ENCODE measurements at regions of chr5 and their contacts with region 1.

Region 1: GRCh38 chr5:124935065-124935464 is 188.6 kb upstream of the ZNF608 start:
- DNase-seq: no peak
- ATAC-seq: peak; percentile 63
- H3K4me3 Mint-ChIP-seq: peak overlapping the region; percentile 38
- H3K27ac Mint-ChIP-seq: peak overlapping the region; percentile 94
- H3K4me1 Mint-ChIP-seq: peaks cover 24% of the 10 kb centered on the region
- H3K27me3 Mint-ChIP-seq: no peaks in the 10 kb centered on the region
- CTCF ChIP-seq: no peak

Region 2: GRCh38 chr5:123244458-123244857 is 1690.6 kb before region 1 on chr5:
- CTCF ChIA-PET with region 1: no interaction called
- POLR2A ChIA-PET with region 1: no interaction called
- intact Hi-C with region 1: no loop called
- DNase-seq: no peak
- ATAC-seq: no peak
- H3K4me3 Mint-ChIP-seq: no peak overlapping the region
- H3K27ac Mint-ChIP-seq: no peak overlapping the region
- H3K4me1 Mint-ChIP-seq: no peaks in the 10 kb centered on the region
- H3K27me3 Mint-ChIP-seq: no peaks in the 10 kb centered on the region
- CTCF ChIP-seq: no peak

Region 3: DNA sequence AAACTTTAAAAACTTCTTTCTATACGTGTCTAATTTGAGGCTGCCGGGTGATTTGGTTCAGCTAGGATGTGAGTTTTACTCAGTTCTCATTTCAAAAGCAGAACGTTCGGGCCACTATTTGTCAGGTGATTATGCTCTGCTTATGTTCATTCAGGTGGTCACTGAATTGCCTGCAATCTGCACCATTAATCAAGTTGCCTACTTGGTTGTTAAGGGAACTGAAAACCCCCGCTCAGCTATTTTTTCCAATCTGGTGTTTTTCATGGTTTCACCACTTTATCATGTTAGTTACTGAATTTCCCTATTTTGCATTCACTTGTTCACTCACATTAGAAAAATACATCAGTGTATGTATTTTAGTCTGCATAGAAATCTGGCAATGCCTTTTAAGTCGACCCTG is 900.1 kb before region 1 on chr5:
- CTCF ChIA-PET with region 1: no interaction called
- POLR2A ChIA-PET with region 1: interaction called, 4 read pairs
- intact Hi-C with region 1: loop called (anchors 1 kb)
- DNase-seq: no peak
- ATAC-seq: peak; percentile 94
- H3K4me3 Mint-ChIP-seq: peak overlapping the region; percentile 48
- H3K27ac Mint-ChIP-seq: peak overlapping the region; percentile 92
- H3K4me1 Mint-ChIP-seq: peaks cover 52% of the 10 kb centered on the region
- H3K27me3 Mint-ChIP-seq: no peaks in the 10 kb centered on the region
- CTCF ChIP-seq: no peak

Region 4: GRCh38 chr5:124524552-124525232 is 410.4 kb before region 1 on chr5:
- CTCF ChIA-PET with region 1: no interaction called
- POLR2A ChIA-PET with region 1: interaction called, 3 read pairs
- intact Hi-C with region 1: loop called (anchors 10 kb)
- DNase-seq: no peak
- ATAC-seq: peak; percentile 92
- H3K4me3 Mint-ChIP-seq: no peak overlapping the region
- H3K27ac Mint-ChIP-seq: peak overlapping the region; percentile 3
- H3K4me1 Mint-ChIP-seq: peaks cover 35% of the 10 kb centered on the region
- H3K27me3 Mint-ChIP-seq: peaks cover 9% of the 10 kb centered on the region
- CTCF ChIP-seq: no peak

Region 5: GRCh38 chr5:124824637-124825158 is 110.4 kb before region 1 on chr5:
- CTCF ChIA-PET with region 1: no interaction called
- POLR2A ChIA-PET with region 1: no interaction called
- intact Hi-C with region 1: loop called (anchors 1 kb)
- DNase-seq: no peak
- ATAC-seq: no peak
- H3K4me3 Mint-ChIP-seq: no peak overlapping the region
- H3K27ac Mint-ChIP-seq: peak overlapping the region; percentile 74
- H3K4me1 Mint-ChIP-seq: peaks cover 17% of the 10 kb centered on the region
- H3K27me3 Mint-ChIP-seq: no peaks in the 10 kb centered on the region
- CTCF ChIP-seq: no peak

Region 6: GRCh38 chr5:124952079-124952478 is 17.0 kb after region 1 on chr5:
- CTCF ChIA-PET with region 1: no interaction called
- POLR2A ChIA-PET with region 1: interaction called, 4 read pairs
- intact Hi-C with region 1: loop called (anchors 1 kb)
- DNase-seq: peak; percentile 25
- ATAC-seq: peak; percentile 82
- H3K4me3 Mint-ChIP-seq: no peak overlapping the region
- H3K27ac Mint-ChIP-seq: peak overlapping the region; percentile 78
- H3K4me1 Mint-ChIP-seq: peaks cover 21% of the 10 kb centered on the region
- H3K27me3 Mint-ChIP-seq: no peaks in the 10 kb centered on the region
- CTCF ChIP-seq: no peak

Region 7: GRCh38 chr5:126536874-126537273 is 1601.8 kb after region 1 on chr5:
- CTCF ChIA-PET with region 1: no interaction called
- POLR2A ChIA-PET with region 1: no interaction called
- intact Hi-C with region 1: loop called (anchors 5 kb)
- DNase-seq: no peak
- ATAC-seq: no peak
- H3K4me3 Mint-ChIP-seq: no peak overlapping the region
- H3K27ac Mint-ChIP-seq: no peak overlapping the region
- H3K4me1 Mint-ChIP-seq: no peaks in the 10 kb centered on the region
- H3K27me3 Mint-ChIP-seq: peaks cover 1% of the 10 kb centered on the region
- CTCF ChIP-seq: no peak